Dendritic cell treated with granulocyte-macrophage colony-stimulating factor and Interleukin-4, amounts not matched to agents 40 ng/mL and 50 ng/mL, for 4 days (primary cell): ENCODE measurements at regions of chr4 and their contacts with region 1.

Region 1: DNA sequence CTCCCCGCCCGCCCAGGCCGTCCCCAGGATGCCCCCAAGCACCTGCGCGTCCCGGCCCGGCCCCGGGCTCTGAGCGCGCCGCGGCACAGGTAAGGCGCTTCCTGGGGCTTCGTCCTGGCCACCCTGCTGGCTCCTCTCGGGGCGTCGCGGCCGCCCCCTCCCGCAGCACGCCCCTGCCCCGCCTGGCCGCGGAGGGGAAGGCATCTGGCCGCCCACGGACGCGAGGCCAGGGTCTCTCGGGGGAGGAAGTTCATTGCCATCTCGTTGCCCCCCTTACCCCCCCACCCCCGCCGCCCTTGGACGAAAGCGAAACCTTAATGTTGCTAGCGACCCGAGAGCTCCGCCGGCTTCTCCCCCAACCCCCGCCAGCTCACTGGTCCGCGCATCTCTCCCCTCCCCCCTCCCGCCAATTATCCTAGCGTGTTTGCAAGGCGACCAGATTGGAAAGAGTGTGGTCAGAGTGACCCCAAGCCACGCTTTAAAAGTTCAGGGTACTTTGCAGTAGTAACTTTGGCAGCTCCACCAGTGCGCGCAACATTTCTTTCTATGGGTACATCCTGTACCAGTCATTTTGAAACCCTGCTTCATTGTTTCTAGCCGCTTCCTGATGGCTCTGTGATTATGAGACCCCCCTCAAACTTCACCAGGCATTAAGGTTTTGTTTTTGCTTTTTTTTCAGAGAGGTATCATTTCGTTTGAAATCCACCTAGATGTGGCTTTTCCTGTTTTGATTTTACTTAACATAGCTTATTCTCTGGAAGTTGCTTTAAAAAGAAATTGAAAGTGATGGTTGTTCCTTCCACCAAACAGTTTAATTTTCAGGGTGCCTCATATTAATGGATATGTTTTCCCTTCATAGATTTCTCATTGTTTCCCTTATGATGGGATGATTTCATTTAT is 626 bp downstream of the TBC1D1 start:
- H3K4me3 Mint-ChIP-seq: peak overlapping the region; percentile 74
- H3K27ac Mint-ChIP-seq: peak overlapping the region; percentile 60
- H3K4me1 Mint-ChIP-seq: peaks cover 40% of the 10 kb centered on the region
- H3K27me3 Mint-ChIP-seq: peaks cover 13% of the 10 kb centered on the region

Region 2: GRCh38 chr4:37826295-37827029 is 65.0 kb before region 1 on chr4 and contains the start of gene PGM2:
- intact Hi-C with region 1: loop called (anchors 10 kb)
- H3K4me3 Mint-ChIP-seq: peak within 1 kb of the TSS; percentile 86
- H3K27ac Mint-ChIP-seq: peak within 1 kb of the TSS; percentile 94
- H3K4me1 Mint-ChIP-seq: peaks cover 39% of the 10 kb centered on the region
- H3K27me3 Mint-ChIP-seq: no peaks in the 10 kb centered on the region

Region 3: GRCh38 chr4:37946503-37947179 is 55.1 kb after region 1 on chr4:
- intact Hi-C with region 1: loop called (anchors 5 kb)
- H3K4me3 Mint-ChIP-seq: no peak overlapping the region
- H3K27ac Mint-ChIP-seq: peak overlapping the region; percentile 39
- H3K4me1 Mint-ChIP-seq: peaks cover 49% of the 10 kb centered on the region
- H3K27me3 Mint-ChIP-seq: peaks cover 2% of the 10 kb centered on the region